T-cell (primary cell): ENCODE measurements at regions of chr1 and their contacts with region 1.

Region 1: DNA sequence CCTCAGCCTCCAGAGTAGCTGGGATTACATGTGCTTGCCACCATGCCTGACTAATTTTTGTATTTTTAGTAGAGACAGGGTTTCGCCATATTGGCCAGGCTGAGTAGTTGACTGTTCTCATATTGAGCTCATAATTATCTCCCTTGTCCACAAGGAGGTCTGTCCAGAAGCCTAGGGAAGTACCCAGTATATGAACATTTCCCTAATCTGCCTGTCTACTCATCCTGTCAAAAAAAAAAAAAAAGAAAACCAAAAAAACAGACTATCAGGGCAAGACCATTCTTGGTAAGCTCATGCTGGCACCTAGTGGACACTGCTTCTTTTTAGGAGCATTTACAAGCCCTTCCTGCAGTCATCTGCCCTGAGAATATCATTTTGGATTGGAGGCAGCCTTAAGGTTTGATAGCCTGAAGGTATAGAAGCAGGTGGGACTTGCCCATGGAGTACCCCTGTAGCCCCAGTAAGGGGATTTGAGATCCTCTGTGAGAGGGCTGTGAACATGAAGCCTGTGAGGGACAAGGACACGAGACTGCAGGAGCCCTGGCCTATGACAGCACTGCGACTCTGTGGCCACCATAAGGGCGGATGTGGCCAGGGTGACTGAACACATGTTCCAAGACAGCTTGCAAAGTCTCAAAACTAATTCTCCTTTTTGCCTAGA is 10.8 kb upstream of the DUSP12 start:
- DNase-seq: peak; percentile 3 to 74 (median 46)
- ATAC-seq: peak; percentile 73 to 91 (median 78)
- H3K4me3 ChIP-seq: no peak overlapping the region
- H3K4me3 Mint-ChIP-seq: peak overlapping the region in 1 of 3 donors; percentile 35
- H3K27ac ChIP-seq: peak overlapping the region; percentile 2
- H3K27ac Mint-ChIP-seq: peak overlapping the region; percentile 42 to 57
- H3K4me1 ChIP-seq: peaks cover 0 to 26% of the 10 kb centered on the region in 2 experiments
- H3K4me1 Mint-ChIP-seq: peaks cover 23 to 34% (median 25%) of the 10 kb centered on the region in 3 donors
- H3K27me3 ChIP-seq: no peaks in the 10 kb centered on the region
- H3K27me3 Mint-ChIP-seq: peaks cover 0 to 5% of the 10 kb centered on the region in 2 donors

Region 2: DNA sequence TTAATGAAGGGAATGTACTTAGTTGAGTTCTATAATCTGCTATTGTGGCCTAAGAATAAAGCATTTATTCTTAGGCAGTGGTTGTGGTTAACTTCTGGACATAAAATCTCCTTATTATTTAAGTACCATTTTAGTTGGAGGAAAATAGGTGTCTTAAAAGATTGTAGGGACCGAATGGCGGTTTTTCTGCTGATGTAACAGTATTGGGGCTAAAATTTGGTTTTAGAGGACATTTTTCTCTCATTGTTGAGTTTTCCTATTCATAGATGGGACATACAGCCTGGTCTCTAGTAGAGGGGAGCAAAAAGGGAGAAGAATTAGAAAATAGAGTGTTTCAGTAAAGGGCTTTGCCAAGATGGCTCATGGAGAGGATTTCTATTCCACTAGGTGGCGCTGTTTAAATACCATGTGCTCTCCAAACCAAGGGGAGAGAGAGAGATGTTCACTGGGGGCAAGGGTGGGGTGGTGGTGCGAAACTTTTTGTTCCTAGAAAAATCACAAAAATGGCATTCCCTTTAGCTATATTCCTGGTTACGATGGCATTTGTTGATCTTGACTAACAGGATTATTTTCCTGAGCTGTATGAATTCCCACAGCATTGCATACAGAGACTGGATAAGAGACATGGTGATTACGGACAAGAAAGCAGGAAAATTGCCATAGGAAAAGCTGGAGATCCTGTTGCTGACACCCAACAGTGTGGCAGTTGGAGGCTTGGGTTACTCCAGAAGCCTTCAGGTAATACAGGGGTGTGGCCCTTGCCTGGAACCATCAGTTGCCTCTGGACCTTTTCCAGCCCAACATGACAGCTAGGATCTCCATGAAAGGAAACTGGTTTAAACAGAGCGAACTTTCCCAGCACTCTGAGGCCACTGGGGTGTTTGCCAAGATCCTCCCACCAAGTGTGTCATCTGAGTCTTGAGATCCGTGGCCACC is 251.7 kb before region 1 on chr1:
- CTCF ChIA-PET with region 1: interaction called, 5 to 22 read pairs
- POLR2A ChIA-PET with region 1: no interaction called
- DNase-seq: peak in 25 of 35 experiments; percentile 2 to 83 (median 24)
- ATAC-seq: peak; percentile 62 to 74 (median 66)
- H3K4me3 ChIP-seq: no peak overlapping the region
- H3K4me3 Mint-ChIP-seq: no peak overlapping the region
- H3K27ac ChIP-seq: no peak overlapping the region
- H3K27ac Mint-ChIP-seq: no peak overlapping the region
- H3K4me1 ChIP-seq: peaks cover 0 to 5% of the 10 kb centered on the region in 2 experiments
- H3K4me1 Mint-ChIP-seq: peaks cover 14 to 20% (median 15%) of the 10 kb centered on the region in 3 donors
- H3K27me3 ChIP-seq: peaks cover 3 to 5% of the 10 kb centered on the region in 2 experiments
- H3K27me3 Mint-ChIP-seq: peaks cover 24 to 27% of the 10 kb centered on the region in 2 donors

Region 3: DNA sequence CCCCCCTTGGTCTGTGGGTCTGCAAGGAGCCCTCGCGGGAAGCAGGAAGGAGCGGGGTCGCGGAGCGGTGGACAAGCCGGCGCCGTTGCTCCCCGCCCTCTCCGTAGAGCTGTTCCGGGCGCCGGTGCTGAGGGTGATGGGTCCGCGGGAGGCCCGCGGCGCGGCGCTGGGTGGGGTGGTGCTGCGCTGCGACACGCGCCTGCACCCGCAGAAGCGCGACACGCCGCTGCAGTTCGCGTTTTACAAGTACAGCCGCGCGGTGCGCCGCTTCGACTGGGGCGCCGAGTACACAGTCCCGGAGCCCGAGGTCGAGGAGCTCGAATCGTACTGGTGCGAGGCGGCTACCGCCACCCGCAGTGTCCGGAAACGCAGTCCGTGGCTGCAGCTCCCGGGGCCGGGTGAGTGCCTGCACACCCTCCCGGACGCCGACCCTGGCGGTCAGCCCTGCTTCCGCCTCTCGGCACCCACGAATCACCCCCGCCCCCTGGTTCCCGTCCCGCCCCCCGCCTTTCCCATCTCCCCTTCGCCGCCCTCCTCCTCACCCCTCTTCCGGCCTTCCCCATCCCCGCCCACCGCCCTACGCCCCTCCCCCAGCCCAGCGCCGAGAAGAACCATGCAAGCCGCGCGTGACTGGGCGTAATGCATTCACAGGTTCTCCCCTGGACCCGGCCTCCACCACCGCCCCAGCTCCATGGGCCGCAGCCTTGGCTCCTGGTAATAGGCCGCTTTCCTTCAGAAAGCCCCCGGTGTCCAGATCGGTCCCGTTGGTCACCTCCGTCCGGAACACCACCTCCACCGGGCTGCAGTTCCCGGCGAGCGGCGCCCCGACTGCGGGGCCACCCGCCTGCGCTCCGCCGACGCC is 11.9 kb before region 1 on chr1:
- CTCF ChIA-PET with region 1: interaction called, 5 to 34 read pairs
- POLR2A ChIA-PET with region 1: no interaction called
- DNase-seq: peak; percentile 35 to 81 (median 64)
- ATAC-seq: peak; percentile 69 to 74 (median 73)
- H3K4me3 ChIP-seq: peak overlapping the region; percentile 77 to 92
- H3K4me3 Mint-ChIP-seq: peak overlapping the region; percentile 91 to 98 (median 95)
- H3K27ac ChIP-seq: peak overlapping the region; percentile 57
- H3K27ac Mint-ChIP-seq: peak overlapping the region; percentile 86 to 90
- H3K4me1 ChIP-seq: peaks cover 9 to 41% of the 10 kb centered on the region in 2 experiments
- H3K4me1 Mint-ChIP-seq: peaks cover 34 to 56% (median 42%) of the 10 kb centered on the region in 3 donors
- H3K27me3 ChIP-seq: peaks cover 8 to 11% of the 10 kb centered on the region in 2 experiments
- H3K27me3 Mint-ChIP-seq: peaks cover 0 to 3% of the 10 kb centered on the region in 2 donors

Region 4: DNA sequence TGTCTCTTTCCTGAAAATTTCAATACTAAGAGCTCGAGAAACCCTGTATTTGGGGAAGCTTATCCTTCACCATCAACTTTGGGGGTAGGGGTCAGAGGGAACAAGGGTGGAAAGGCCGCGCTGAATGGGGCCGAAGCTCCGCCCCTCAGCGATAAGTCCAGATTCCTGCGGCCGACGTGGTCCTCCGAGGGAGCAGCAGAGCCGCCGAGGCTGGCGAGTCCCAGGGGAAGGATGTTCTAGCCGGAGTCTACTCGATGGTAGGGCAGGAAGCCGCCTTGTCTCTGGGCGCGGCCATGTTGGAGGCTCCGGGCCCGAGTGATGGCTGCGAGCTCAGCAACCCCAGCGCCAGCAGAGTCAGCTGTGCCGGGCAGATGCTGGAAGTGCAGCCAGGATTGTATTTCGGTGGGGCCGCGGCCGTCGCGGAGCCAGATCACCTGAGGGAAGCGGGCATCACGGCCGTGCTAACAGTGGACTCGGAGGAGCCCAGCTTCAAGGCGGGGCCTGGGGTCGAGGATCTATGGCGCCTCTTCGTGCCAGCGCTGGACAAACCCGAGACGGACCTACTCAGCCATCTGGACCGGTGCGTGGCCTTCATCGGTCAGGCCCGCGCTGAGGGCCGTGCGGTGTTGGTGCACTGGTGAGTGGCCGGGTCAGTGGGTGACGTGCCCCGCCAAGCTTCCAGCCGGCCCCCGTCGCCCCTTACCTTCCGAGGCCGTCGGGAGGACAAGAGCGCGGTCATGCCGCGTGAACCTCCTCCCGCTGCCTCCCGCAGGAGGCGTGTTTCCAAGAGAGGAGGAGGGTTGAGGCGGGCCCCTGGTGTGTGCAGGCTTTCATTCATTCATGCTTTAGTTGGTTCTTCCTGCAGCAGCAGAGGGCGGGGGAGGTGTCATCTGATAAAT is 11.0 kb after region 1 on chr1 and contains the start of gene DUSP12:
- CTCF ChIA-PET with region 1: interaction called in 1 of 2 experiments, 12 read pairs
- POLR2A ChIA-PET with region 1: interaction called in 1 of 2 experiments, 3 read pairs
- DNase-seq: peak; percentile 70 to 90 (median 81)
- ATAC-seq: peak; percentile 98 to 100 (median 99)
- H3K4me3 ChIP-seq: peak within 1 kb of the TSS; percentile 72 to 92
- H3K4me3 Mint-ChIP-seq: peak within 1 kb of the TSS; percentile 98 to 99 (median 99)
- H3K27ac ChIP-seq: peak within 1 kb of the TSS; percentile 60
- H3K27ac Mint-ChIP-seq: peak within 1 kb of the TSS; percentile 96 to 98
- H3K4me1 ChIP-seq: peaks cover 0 to 14% of the 10 kb centered on the region in 2 experiments
- H3K4me1 Mint-ChIP-seq: peaks cover 43 to 44% (median 43%) of the 10 kb centered on the region in 3 donors
- H3K27me3 ChIP-seq: no peaks in the 10 kb centered on the region
- H3K27me3 Mint-ChIP-seq: peaks cover 2 to 3% of the 10 kb centered on the region in 2 donors
- total RNA-seq, gene DUSP12: 18.9 to 33.5 (median 29.1) TPM

Region 5: DNA sequence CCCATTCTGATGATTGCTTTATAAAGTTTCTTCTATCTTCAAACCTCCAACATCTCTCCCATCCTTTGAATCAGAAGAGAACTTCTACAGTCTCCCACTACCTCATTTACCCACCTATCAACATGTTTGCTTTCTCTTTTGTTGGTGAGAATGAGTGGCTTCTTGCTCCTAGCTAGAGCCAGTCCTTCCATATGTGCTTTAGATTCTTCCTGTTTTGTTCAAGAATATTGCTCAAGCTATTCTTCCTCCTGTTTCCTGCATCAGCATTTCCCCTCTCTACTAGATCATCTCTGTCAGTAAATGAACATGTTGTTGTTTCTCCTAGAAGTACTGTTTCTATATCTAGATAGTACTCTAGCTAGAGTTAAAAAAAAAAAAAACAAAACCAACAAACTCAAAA is 33.6 kb after region 1 on chr1:
- CTCF ChIA-PET with region 1: no interaction called
- POLR2A ChIA-PET with region 1: no interaction called
- DNase-seq: no peak
- ATAC-seq: peak; percentile 10 to 50 (median 29)
- H3K4me3 ChIP-seq: no peak overlapping the region
- H3K4me3 Mint-ChIP-seq: no peak overlapping the region
- H3K27ac ChIP-seq: peak overlapping the region; percentile 0
- H3K27ac Mint-ChIP-seq: no peak overlapping the region
- H3K4me1 ChIP-seq: peaks cover 41 to 55% of the 10 kb centered on the region in 2 experiments
- H3K4me1 Mint-ChIP-seq: peaks cover 16 to 30% (median 21%) of the 10 kb centered on the region in 3 donors
- H3K27me3 ChIP-seq: no peaks in the 10 kb centered on the region
- H3K27me3 Mint-ChIP-seq: no peaks in the 10 kb centered on the region

Region 6: DNA sequence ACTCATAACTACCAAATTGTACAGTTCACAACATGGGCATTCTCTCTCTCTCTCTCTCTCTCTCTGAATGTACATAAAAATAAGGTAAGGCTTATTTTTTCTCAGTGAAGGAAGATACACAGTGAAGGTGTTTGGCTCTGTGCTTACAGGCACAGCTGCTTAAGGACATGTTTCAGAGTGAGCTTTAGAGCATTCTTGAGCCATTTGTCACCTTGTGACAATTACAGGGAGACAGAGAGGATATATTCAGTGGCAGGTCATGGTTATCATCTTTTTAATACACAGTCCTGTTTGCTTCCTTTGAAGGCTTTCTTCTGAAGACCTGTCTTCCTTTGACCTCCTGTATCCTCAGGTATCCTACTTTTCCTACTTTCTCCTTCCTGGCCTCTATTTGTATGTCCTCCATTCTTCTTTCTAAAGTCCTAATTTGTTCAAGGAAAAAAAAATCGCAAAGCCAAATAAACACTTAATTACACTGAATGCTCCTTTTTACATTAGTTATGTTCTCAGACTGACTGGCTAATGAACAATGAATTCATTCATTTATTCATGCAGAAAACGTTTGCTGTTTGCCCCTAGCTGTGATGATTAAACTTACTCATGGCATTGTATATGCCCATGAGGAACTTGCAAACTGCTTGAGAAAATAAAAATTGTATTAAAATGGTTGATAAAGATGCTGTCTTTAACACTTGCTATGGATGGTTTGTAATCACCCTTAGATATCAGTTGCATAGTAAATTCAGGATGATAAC is 1085.2 kb after region 1 on chr1:
- CTCF ChIA-PET with region 1: no interaction called
- POLR2A ChIA-PET with region 1: no interaction called
- DNase-seq: no peak
- ATAC-seq: no peak
- H3K4me3 ChIP-seq: no peak overlapping the region
- H3K4me3 Mint-ChIP-seq: no peak overlapping the region
- H3K27ac ChIP-seq: no peak overlapping the region
- H3K27ac Mint-ChIP-seq: no peak overlapping the region
- H3K4me1 ChIP-seq: peaks cover 0 to 11% of the 10 kb centered on the region in 2 experiments
- H3K4me1 Mint-ChIP-seq: peaks cover 16 to 17% (median 16%) of the 10 kb centered on the region in 3 donors
- H3K27me3 ChIP-seq: peaks cover 12 to 15% of the 10 kb centered on the region in 2 experiments
- H3K27me3 Mint-ChIP-seq: peaks cover 28 to 33% of the 10 kb centered on the region in 2 donors